ENCODE measurements at regions of chr2 and their contacts with region 1.

Region 1: GRCh38 chr2:47842846-47843245 is 59.9 kb downstream of the MSH6 start:
- DNase-seq: no peak
- H3K4me3 Mint-ChIP-seq: no peak overlapping the region
- H3K27ac Mint-ChIP-seq: peak overlapping the region; percentile 30
- H3K4me1 Mint-ChIP-seq: peaks cover 39% of the 10 kb centered on the region
- H3K27me3 Mint-ChIP-seq: no peaks in the 10 kb centered on the region

Region 2: GRCh38 chr2:47862949-47863348 is 20.1 kb after region 1 on chr2:
- CTCF ChIA-PET with region 1: interaction called, 14 read pairs
- intact Hi-C with region 1: no loop called
- DNase-seq: no peak
- H3K4me3 Mint-ChIP-seq: no peak overlapping the region
- H3K27ac Mint-ChIP-seq: no peak overlapping the region
- H3K4me1 Mint-ChIP-seq: peaks cover 59% of the 10 kb centered on the region
- H3K27me3 Mint-ChIP-seq: no peaks in the 10 kb centered on the region